IMR-90 (cell line): ENCODE measurements at regions of chr22 and their contacts with region 1.

Region 1: DNA sequence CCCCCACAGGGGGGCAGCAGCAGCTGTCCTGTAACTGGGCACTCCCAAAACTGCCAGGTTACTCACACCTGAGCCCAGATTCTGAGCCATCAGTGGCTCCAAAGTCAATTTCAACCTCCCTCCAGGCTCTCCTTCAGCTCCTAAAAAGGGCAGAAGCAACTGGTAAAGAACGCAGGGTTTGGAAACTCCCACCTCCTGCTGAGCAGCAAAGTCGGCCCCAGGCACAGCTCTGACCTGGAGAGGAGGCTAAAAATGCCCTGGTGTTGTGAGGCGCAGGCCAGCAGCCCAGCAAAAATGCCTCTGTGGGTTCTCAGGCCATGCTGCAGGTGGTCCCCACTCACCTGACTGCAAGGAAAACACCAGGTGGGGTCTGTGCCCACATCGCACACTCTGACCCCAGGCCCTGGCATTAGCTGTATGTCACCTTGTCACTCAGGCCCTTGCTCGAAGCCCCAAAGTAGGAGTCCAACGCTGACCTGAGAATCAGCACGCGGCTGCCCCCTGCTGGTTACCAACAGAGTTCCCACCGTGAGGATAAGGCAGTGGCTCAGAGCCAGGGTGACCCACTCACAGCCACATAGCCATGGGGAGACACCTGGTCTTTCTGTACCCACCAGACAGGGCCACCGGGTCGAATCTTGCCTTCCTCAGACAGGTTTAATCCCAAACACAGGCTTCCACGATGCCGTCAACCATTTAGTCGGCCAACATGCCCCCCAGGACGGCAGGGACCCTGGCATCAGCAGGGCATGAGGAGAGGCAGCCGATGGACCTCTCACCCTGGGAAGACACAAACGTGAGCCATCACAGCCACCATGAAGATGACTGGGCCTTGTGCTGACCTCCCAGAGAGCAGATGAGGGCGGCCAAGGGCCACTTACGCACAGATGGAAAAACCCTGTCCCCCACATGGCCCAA is 11.1 kb downstream of the POLR3H start:
- DNase-seq: peak; percentile 58
- ATAC-seq: peak; percentile 68
- H3K4me3 ChIP-seq: no peak overlapping the region
- H3K27ac ChIP-seq: no peak overlapping the region
- H3K4me1 ChIP-seq: no peaks in the 10 kb centered on the region
- H3K27me3 ChIP-seq: no peaks in the 10 kb centered on the region
- CTCF ChIP-seq: peak; percentile 68
- POLR2A ChIP-seq: no peak
- RAD21 ChIP-seq: peak; percentile 57

Region 2: GRCh38 chr22:41381329-41382097 is 151.7 kb before region 1 on chr22 and contains the start of gene TEF:
- CTCF ChIA-PET with region 1: no interaction called
- POLR2A ChIA-PET with region 1: interaction called, 13 read pairs
- dilution Hi-C with region 1: no loop called
- in situ Hi-C with region 1: no loop called
- intact Hi-C with region 1: no loop called
- DNase-seq: peak; percentile 98
- ATAC-seq: peak; percentile 88
- H3K4me3 ChIP-seq: peak within 1 kb of the TSS; percentile 64
- H3K27ac ChIP-seq: peak within 1 kb of the TSS; percentile 86
- H3K4me1 ChIP-seq: peaks cover 9% of the 10 kb centered on the region
- H3K27me3 ChIP-seq: no peaks in the 10 kb centered on the region
- CTCF ChIP-seq: no peak
- POLR2A ChIP-seq: peak; percentile 52
- RAD21 ChIP-seq: no peak
- total RNA-seq, gene TEF: 5.6 and 6.1 TPM in 2 replicates

Region 3: GRCh38 chr22:41596776-41597634 is 63.8 kb after region 1 on chr22:
- CTCF ChIA-PET with region 1: no interaction called
- POLR2A ChIA-PET with region 1: no interaction called
- dilution Hi-C with region 1: no loop called
- in situ Hi-C with region 1: no loop called
- intact Hi-C with region 1: loop called (anchors 1 kb)
- DNase-seq: peak; percentile 37
- ATAC-seq: peak; percentile 75
- H3K4me3 ChIP-seq: no peak overlapping the region
- H3K27ac ChIP-seq: no peak overlapping the region
- H3K4me1 ChIP-seq: peaks cover 14% of the 10 kb centered on the region
- H3K27me3 ChIP-seq: no peaks in the 10 kb centered on the region
- CTCF ChIP-seq: peak; percentile 74
- POLR2A ChIP-seq: no peak
- RAD21 ChIP-seq: peak; percentile 86

Region 4: GRCh38 chr22:41832553-41833368 is 299.6 kb after region 1 on chr22 and contains the start of gene SREBF2:
- CTCF ChIA-PET with region 1: no interaction called
- POLR2A ChIA-PET with region 1: no interaction called
- dilution Hi-C with region 1: no loop called
- in situ Hi-C with region 1: no loop called
- intact Hi-C with region 1: no loop called
- DNase-seq: peak; percentile 99
- ATAC-seq: peak; percentile 98
- H3K4me3 ChIP-seq: peak within 1 kb of the TSS; percentile 83
- H3K27ac ChIP-seq: peak within 1 kb of the TSS; percentile 72
- H3K4me1 ChIP-seq: no peaks in the 10 kb centered on the region
- H3K27me3 ChIP-seq: no peaks in the 10 kb centered on the region
- CTCF ChIP-seq: no peak
- POLR2A ChIP-seq: peak; percentile 72; the same call in 1 of the 2 replicates
- RAD21 ChIP-seq: no peak
- total RNA-seq, gene SREBF2: 8.1 and 9.2 TPM in 2 replicates